ENCODE measurements at regions of chr16 and their contacts with region 1.

Region 1: GRCh38 chr16:71961066-71962039 is 38.8 kb downstream of the PKD1L3 start:
- H3K4me3 Mint-ChIP-seq: no peak overlapping the region
- H3K27ac Mint-ChIP-seq: no peak overlapping the region
- H3K4me1 Mint-ChIP-seq: peaks cover 13% of the 10 kb centered on the region
- H3K27me3 Mint-ChIP-seq: no peaks in the 10 kb centered on the region

Region 2: GRCh38 chr16:71781741-71782140 is 179.6 kb before region 1 on chr16:
- intact Hi-C with region 1: loop called (anchors 10 kb)
- H3K4me3 Mint-ChIP-seq: no peak overlapping the region
- H3K27ac Mint-ChIP-seq: no peak overlapping the region
- H3K4me1 Mint-ChIP-seq: no peaks in the 10 kb centered on the region
- H3K27me3 Mint-ChIP-seq: no peaks in the 10 kb centered on the region